ENCODE measurements at regions of chr1 and their contacts with region 1.

Region 1: DNA sequence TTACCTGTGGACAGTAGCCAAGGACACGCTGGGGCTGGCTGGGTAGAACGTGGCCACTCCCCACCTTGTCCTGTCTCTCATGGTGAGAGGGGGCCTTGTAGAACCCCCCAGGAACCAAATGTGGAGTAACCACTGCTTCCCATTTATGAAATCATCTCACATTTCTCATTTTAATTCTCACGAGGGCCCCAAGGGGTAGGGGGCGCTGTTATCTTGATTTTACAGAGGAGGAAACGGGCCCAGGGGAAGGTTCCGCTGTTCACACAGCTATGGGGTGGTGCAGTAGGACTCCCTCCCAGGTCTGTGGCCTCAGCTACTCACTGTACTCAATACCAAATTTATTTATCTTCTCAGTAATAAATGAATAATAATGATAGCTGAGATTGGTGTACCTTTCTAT is 5.5 kb downstream of the SMPDL3B start:
- DNase-seq: peak; percentile 53 to 80 (median 78)
- ATAC-seq: peak; percentile 87
- H3K4me3 ChIP-seq: no peak overlapping the region
- H3K4me3 Mint-ChIP-seq: no peak overlapping the region
- H3K27ac ChIP-seq: peak overlapping the region; percentile 42
- H3K27ac Mint-ChIP-seq: peak overlapping the region; percentile 54 to 97 (median 90)
- H3K4me1 ChIP-seq: peaks cover 9 to 30% of the 10 kb centered on the region in 2 donors
- H3K4me1 Mint-ChIP-seq: peaks cover 31 to 53% (median 50%) of the 10 kb centered on the region in 7 donors
- H3K27me3 ChIP-seq: no peaks in the 10 kb centered on the region
- H3K27me3 Mint-ChIP-seq: peaks cover 0 to 8% (median 6%) of the 10 kb centered on the region in 5 donors

Region 2: GRCh38 chr1:27365372-27366112 is 574.8 kb before region 1 on chr1:
- CTCF ChIA-PET with region 1: no interaction called
- POLR2A ChIA-PET with region 1: no interaction called
- intact Hi-C with region 1: no loop called
- DNase-seq: peak; percentile 48 to 77 (median 67)
- ATAC-seq: peak; percentile 78
- H3K4me3 ChIP-seq: peak overlapping the region; percentile 61
- H3K4me3 Mint-ChIP-seq: peak overlapping the region; percentile 74 to 93 (median 88)
- H3K27ac ChIP-seq: peak overlapping the region; percentile 60
- H3K27ac Mint-ChIP-seq: peak overlapping the region; percentile 54 to 90 (median 73)
- H3K4me1 ChIP-seq: peaks cover 13 to 17% of the 10 kb centered on the region in 2 donors
- H3K4me1 Mint-ChIP-seq: peaks cover 21 to 55% (median 42%) of the 10 kb centered on the region in 7 donors
- H3K27me3 ChIP-seq: no peaks in the 10 kb centered on the region
- H3K27me3 Mint-ChIP-seq: no peaks in the 10 kb centered on the region

Region 3: GRCh38 chr1:27858072-27858958 is 82.0 kb before region 1 on chr1:
- CTCF ChIA-PET with region 1: interaction called, 10 read pairs
- POLR2A ChIA-PET with region 1: interaction called, 3 read pairs
- intact Hi-C with region 1: loop called in 1 of 2 experiments (anchors 1 kb)
- DNase-seq: peak; percentile 71 to 86 (median 80)
- ATAC-seq: peak; percentile 97
- H3K4me3 ChIP-seq: no peak overlapping the region
- H3K4me3 Mint-ChIP-seq: peak overlapping the region in 6 of 10 donors; percentile 14 to 61 (median 40)
- H3K27ac ChIP-seq: no peak overlapping the region
- H3K27ac Mint-ChIP-seq: peak overlapping the region in 5 of 9 donors; percentile 33 to 78 (median 74)
- H3K4me1 ChIP-seq: peaks cover 0 to 11% of the 10 kb centered on the region in 2 donors
- H3K4me1 Mint-ChIP-seq: peaks cover 7 to 36% (median 28%) of the 10 kb centered on the region in 7 donors
- H3K27me3 ChIP-seq: no peaks in the 10 kb centered on the region
- H3K27me3 Mint-ChIP-seq: no peaks in the 10 kb centered on the region

Region 4: DNA sequence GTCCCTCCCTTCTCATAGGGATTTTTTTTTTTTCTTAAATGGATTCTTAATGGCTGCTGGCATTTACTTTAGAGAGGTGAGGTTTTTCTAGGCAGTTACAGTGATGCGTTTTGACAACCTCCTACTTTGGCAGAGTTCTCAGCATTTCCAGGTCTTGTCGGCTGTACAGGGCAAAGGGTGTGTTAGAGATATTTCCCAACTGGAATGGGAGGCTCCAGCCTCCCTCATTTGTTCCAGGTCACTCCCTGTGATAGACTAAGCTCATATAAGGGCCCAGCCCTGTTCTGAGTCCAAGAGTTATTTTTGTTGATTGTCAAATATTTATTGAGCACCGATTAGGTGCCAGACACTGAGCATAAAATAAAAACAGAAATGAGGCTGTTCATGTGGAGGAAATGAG is 11.8 kb after region 1 on chr1:
- CTCF ChIA-PET with region 1: interaction called, 19 read pairs
- POLR2A ChIA-PET with region 1: interaction called, 4 read pairs
- intact Hi-C with region 1: no loop called
- DNase-seq: no peak
- ATAC-seq: no peak
- H3K4me3 ChIP-seq: no peak overlapping the region
- H3K4me3 Mint-ChIP-seq: no peak overlapping the region
- H3K27ac ChIP-seq: no peak overlapping the region
- H3K27ac Mint-ChIP-seq: peak overlapping the region in 1 of 9 donors; percentile 23
- H3K4me1 ChIP-seq: no peaks in the 10 kb centered on the region
- H3K4me1 Mint-ChIP-seq: peaks cover 0 to 4% (median 2%) of the 10 kb centered on the region in 7 donors
- H3K27me3 ChIP-seq: no peaks in the 10 kb centered on the region
- H3K27me3 Mint-ChIP-seq: peaks cover 0 to 10% (median 0%) of the 10 kb centered on the region in 5 donors

Region 5: GRCh38 chr1:27959400-27960217 is 19.3 kb after region 1 on chr1 and contains the start of gene XKR8:
- CTCF ChIA-PET with region 1: interaction called, 19 read pairs
- POLR2A ChIA-PET with region 1: interaction called, 32 read pairs
- intact Hi-C with region 1: loop called (anchors 1 to 2 kb)
- DNase-seq: peak; percentile 76 to 87 (median 85)
- ATAC-seq: peak; percentile 99
- H3K4me3 ChIP-seq: peak within 1 kb of the TSS; percentile 79
- H3K4me3 Mint-ChIP-seq: peak within 1 kb of the TSS; percentile 85 to 91 (median 88)
- H3K27ac ChIP-seq: peak within 1 kb of the TSS; percentile 91
- H3K27ac Mint-ChIP-seq: peak within 1 kb of the TSS; percentile 79 to 94 (median 91)
- H3K4me1 ChIP-seq: peaks cover 19 to 24% of the 10 kb centered on the region in 2 donors
- H3K4me1 Mint-ChIP-seq: peaks cover 12 to 39% (median 28%) of the 10 kb centered on the region in 7 donors
- H3K27me3 ChIP-seq: no peaks in the 10 kb centered on the region
- H3K27me3 Mint-ChIP-seq: peaks cover 0 to 7% (median 0%) of the 10 kb centered on the region in 5 donors
- total RNA-seq, gene XKR8: 8.4 to 15.8 (median 10.7) TPM

Region 6: DNA sequence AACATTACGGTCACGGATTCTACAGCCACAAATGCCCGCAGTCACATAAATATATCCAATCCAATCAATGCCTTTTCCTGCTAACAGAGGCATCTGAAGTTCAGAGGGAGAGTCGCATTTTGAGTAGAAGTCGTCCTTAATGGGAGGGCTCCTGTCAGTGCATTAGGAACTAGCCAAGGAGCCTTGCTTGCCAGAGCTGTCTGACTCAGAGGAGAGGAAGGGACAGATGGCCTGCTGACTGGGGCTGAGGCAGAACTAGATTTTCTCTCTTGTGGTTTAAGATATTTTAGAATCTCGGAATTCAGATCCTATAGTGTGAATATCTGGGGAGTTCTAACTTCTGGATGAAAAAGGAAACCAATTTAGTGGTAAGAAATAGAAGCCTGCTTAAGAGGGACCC is 30.1 kb after region 1 on chr1:
- CTCF ChIA-PET with region 1: interaction called, 110 read pairs
- POLR2A ChIA-PET with region 1: interaction called, 3 read pairs
- intact Hi-C with region 1: no loop called
- DNase-seq: no peak
- ATAC-seq: no peak
- H3K4me3 ChIP-seq: no peak overlapping the region
- H3K4me3 Mint-ChIP-seq: no peak overlapping the region
- H3K27ac ChIP-seq: peak overlapping the region; percentile 23
- H3K27ac Mint-ChIP-seq: peak overlapping the region in 8 of 9 donors; percentile 8 to 57 (median 34)
- H3K4me1 ChIP-seq: peaks cover 0 to 5% of the 10 kb centered on the region in 2 donors
- H3K4me1 Mint-ChIP-seq: peaks cover 14 to 36% (median 23%) of the 10 kb centered on the region in 7 donors
- H3K27me3 ChIP-seq: no peaks in the 10 kb centered on the region
- H3K27me3 Mint-ChIP-seq: no peaks in the 10 kb centered on the region

Region 7: GRCh38 chr1:27979151-27979858 is 39.0 kb after region 1 on chr1:
- CTCF ChIA-PET with region 1: interaction called, 110 read pairs
- POLR2A ChIA-PET with region 1: interaction called, 5 read pairs
- intact Hi-C with region 1: loop called (anchors 1 kb)
- DNase-seq: peak in 7 of 9 donors; percentile 24 to 66 (median 53)
- ATAC-seq: peak; percentile 80
- H3K4me3 ChIP-seq: no peak overlapping the region
- H3K4me3 Mint-ChIP-seq: no peak overlapping the region
- H3K27ac ChIP-seq: no peak overlapping the region
- H3K27ac Mint-ChIP-seq: no peak overlapping the region
- H3K4me1 ChIP-seq: no peaks in the 10 kb centered on the region
- H3K4me1 Mint-ChIP-seq: peaks cover 0 to 3% (median 0%) of the 10 kb centered on the region in 7 donors
- H3K27me3 ChIP-seq: no peaks in the 10 kb centered on the region
- H3K27me3 Mint-ChIP-seq: no peaks in the 10 kb centered on the region

Region 8: GRCh38 chr1:27992276-27992675 is 52.0 kb after region 1 on chr1:
- CTCF ChIA-PET with region 1: interaction called, 11 read pairs
- POLR2A ChIA-PET with region 1: interaction called, 5 read pairs
- intact Hi-C with region 1: no loop called
- DNase-seq: peak; percentile 20 to 65 (median 56)
- ATAC-seq: peak; percentile 86
- H3K4me3 ChIP-seq: no peak overlapping the region
- H3K4me3 Mint-ChIP-seq: peak overlapping the region; percentile 24 to 77 (median 32)
- H3K27ac ChIP-seq: peak overlapping the region; percentile 70
- H3K27ac Mint-ChIP-seq: peak overlapping the region; percentile 62 to 96 (median 80)
- H3K4me1 ChIP-seq: peaks cover 20 to 24% of the 10 kb centered on the region in 2 donors
- H3K4me1 Mint-ChIP-seq: peaks cover 14 to 50% (median 35%) of the 10 kb centered on the region in 7 donors
- H3K27me3 ChIP-seq: no peaks in the 10 kb centered on the region
- H3K27me3 Mint-ChIP-seq: no peaks in the 10 kb centered on the region

Measured in naive thymus-derived CD4-positive, alpha-beta T cell (primary cell).